ENCODE measurements at regions of chr12 and their contacts with region 1.

Region 1: GRCh38 chr12:70733385-70733784 is 96.2 kb upstream of the PTPRB start:
- DNase-seq: peak in 3 of 10 donors; percentile 39 to 57 (median 52)
- H3K4me3 ChIP-seq: no peak overlapping the region
- H3K27ac ChIP-seq: no peak overlapping the region
- H3K27me3 ChIP-seq: no peaks in the 10 kb centered on the region
- CTCF ChIP-seq: peak; percentile 42 to 91 (median 81)

Region 2: DNA sequence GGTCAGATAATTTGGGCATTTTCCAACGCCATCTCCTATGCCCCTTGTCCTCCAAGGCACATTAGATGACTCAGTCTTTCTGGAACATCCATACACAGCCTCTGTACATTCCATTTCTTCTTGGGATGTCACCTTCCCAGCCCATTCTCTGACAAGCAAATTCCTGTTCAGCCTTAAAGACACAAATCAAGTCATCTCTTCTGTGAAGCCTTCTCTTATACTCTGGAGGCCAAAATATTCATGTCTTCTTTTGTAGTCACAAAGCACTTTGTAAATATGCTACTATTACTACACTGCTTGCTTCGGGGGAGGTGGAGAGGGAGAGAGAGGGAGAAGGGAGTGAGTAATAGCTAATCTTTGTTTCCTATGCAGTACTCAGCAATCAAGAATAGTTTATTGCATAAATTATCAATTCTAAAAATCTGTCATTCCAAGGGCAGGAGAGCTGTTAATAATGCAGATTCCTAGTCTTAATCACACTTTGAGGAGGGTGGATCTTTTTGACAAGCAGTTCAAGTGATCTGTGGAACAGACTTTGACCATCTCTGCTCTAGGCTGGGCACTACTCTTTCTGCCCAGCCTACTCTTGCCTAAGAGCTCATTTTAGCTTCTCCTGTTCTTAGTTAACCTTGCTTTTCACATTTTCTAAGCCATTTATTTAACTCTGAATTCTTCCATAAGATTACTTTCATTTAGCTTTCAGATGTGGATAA is 339.4 kb before region 1 on chr12:
- intact Hi-C with region 1: no loop called
- DNase-seq: no peak
- H3K4me3 ChIP-seq: no peak overlapping the region
- H3K27ac ChIP-seq: peak overlapping the region in 14 of 59 donors; percentile 2 to 54 (median 32)
- H3K27me3 ChIP-seq: no peaks in the 10 kb centered on the region
- CTCF ChIP-seq: no peak

Region 3: GRCh38 chr12:70849265-70849960 is 116.0 kb after region 1 on chr12:
- intact Hi-C with region 1: loop called (anchors 2 to 5 kb)
- DNase-seq: no peak
- H3K4me3 ChIP-seq: no peak overlapping the region
- H3K27ac ChIP-seq: no peak overlapping the region
- H3K27me3 ChIP-seq: no peaks in the 10 kb centered on the region
- CTCF ChIP-seq: peak; percentile 30 to 84 (median 66)

Region 4: DNA sequence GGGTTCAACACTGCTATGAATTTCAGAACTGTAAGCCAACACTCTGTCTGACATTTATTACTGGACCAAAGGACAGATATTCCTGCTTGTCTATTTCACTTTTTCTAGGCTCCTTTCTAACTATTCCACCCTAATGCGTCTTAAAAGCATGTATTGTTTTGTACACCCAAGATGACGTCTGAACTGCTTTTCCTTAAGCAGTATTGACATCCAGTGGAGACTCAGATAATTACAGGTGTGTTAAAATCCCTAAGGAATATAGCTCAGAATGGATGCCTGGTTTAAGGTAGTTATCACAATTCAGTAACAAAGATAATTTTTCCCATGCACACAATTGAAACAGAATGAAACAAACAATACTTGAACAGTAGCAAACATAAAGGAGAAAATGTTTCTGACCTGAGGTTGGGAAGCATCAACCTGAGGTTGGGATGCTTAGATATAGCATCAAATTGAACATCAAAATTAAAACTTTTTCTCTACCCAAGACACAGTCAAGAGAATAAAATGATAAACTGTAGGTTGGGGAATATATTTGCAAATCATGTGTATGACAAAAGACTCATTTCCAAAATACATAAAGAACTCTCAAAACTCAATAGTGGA is 280.9 kb after region 1 on chr12:
- intact Hi-C with region 1: loop called (anchors 5 to 10 kb)
- DNase-seq: no peak
- H3K4me3 ChIP-seq: peak overlapping the region in 3 of 59 donors; percentile 1 to 22 (median 18)
- H3K27ac ChIP-seq: no peak overlapping the region
- H3K27me3 ChIP-seq: peaks cover 0 to 4% (median 0%) of the 10 kb centered on the region in 45 donors
- CTCF ChIP-seq: peak; percentile 22 to 66 (median 50)